ENCODE measurements at regions of chr18 and their contacts with region 1.

Region 1: GRCh38 chr18:24726727-24727492 is 266.5 kb downstream of the HRH4 start:
- DNase-seq: peak; percentile 25 to 80
- H3K4me3 ChIP-seq: peak overlapping the region; percentile 38 to 43
- H3K27ac ChIP-seq: peak overlapping the region; percentile 5
- H3K4me1 ChIP-seq: peaks cover 0 to 7% (median 4%) of the 10 kb centered on the region in 4 donors
- H3K27me3 ChIP-seq: peaks cover 0 to 9% of the 10 kb centered on the region in 2 donors
- CTCF ChIP-seq: peak; percentile 74 to 90

Region 2: GRCh38 chr18:24362758-24363157 is 364.2 kb before region 1 on chr18:
- intact Hi-C with region 1: loop called (anchors 5 kb)
- DNase-seq: no peak
- H3K4me3 ChIP-seq: no peak overlapping the region
- H3K27ac ChIP-seq: no peak overlapping the region
- H3K4me1 ChIP-seq: no peaks in the 10 kb centered on the region
- H3K27me3 ChIP-seq: no peaks in the 10 kb centered on the region
- CTCF ChIP-seq: no peak

Region 3: GRCh38 chr18:24595561-24596031 is 131.3 kb before region 1 on chr18:
- intact Hi-C with region 1: loop called (anchors 10 kb)
- DNase-seq: no peak
- H3K4me3 ChIP-seq: no peak overlapping the region
- H3K27ac ChIP-seq: no peak overlapping the region
- H3K4me1 ChIP-seq: no peaks in the 10 kb centered on the region
- H3K27me3 ChIP-seq: no peaks in the 10 kb centered on the region
- CTCF ChIP-seq: no peak